AG04449 (cell line): ENCODE measurements at regions of chr1 and their contacts with region 1.

Region 1: GRCh38 chr1:9101510-9102146 is 27.3 kb downstream of the GPR157 start:
- DNase-seq: peak; percentile 16
- H3K4me3 ChIP-seq: no peak overlapping the region
- CTCF ChIP-seq: peak; percentile 87

Region 2: DNA sequence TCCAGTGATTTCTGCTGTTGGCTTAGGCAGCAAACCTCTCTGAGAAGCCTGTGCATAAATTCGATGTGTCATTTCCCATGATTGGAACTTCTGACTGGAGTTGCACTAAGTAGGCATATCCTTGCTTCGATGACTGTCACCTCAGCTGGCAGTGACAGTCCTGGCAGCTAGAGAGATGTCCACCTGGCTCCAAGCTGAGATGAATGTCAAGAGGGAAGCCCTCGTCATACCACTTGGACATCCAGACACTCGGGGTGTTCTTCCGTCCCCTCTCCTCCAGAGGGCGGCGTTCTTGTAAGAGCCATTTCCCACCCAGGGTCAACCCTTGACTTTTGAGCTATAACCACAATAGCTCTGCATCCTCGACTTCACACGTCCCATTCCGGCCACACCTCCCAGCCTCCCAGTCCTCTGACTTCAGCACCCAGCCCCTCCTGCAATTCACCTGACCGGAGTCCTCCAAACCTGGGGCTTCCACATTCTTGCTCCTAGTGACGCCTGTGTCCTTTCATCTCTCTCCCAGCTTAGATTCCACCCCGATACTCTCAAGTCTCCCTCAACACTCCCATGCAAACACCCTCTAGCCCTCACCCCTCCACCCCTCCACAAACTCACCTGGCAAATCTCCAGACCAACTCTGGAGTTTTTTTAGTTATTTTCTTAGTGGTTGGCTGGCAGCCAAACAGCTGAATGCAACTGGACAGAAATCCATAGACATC is 138.7 kb before region 1 on chr1:
- CTCF ChIA-PET with region 1: interaction called, 19 read pairs
- POLR2A ChIA-PET with region 1: no interaction called
- DNase-seq: no peak
- H3K4me3 ChIP-seq: no peak overlapping the region
- CTCF ChIP-seq: peak; percentile 37

Region 3: GRCh38 chr1:9058465-9058864 is 43.2 kb before region 1 on chr1:
- CTCF ChIA-PET with region 1: interaction called, 23 read pairs
- POLR2A ChIA-PET with region 1: no interaction called
- DNase-seq: no peak
- H3K4me3 ChIP-seq: no peak overlapping the region
- CTCF ChIP-seq: peak; percentile 50

Region 4: DNA sequence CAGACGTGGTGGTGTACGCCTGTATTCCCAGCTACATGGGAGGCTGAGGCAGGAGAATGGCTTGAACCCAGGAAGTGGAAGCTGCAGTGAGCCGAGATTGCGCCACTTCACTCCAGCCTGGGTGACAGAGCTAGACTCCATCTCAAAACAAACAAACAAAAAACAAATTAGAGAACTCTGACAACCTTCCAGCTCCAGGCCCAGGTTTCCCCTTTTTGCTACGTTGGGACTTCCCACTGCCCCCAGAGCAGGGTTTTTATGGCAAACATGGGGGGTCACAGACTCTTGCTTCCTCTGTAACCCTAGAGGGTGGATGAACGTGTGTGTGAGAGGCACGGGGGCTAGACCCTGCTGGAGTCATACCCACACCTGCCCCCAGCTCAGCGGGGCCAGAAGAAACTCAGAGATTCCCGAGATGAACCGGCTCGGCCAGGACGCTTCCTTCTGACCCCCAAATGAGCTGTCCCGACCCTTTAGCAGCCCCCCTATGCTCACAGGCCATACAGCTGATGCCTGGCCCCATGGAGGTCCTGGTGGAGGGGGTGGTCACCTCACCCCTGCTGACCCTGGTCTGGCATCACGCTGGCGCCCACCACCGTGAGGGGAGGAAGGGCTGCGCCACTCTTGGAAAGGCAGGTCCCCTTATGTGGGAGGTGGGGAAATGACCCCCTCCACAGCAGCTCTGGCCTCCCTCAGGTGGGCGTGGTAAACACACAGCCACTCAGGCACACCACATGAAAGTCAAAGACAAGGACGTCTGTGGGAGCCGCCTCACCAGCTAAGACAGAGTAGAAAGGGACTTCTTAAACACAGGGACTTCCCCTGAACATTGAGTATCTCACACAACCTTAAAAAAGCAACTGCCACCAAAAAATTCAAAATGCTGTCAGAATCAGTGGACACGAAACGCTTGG is 20.1 kb after region 1 on chr1:
- CTCF ChIA-PET with region 1: interaction called, 17 read pairs
- POLR2A ChIA-PET with region 1: no interaction called
- DNase-seq: no peak
- H3K4me3 ChIP-seq: no peak overlapping the region
- CTCF ChIP-seq: no peak

Region 5: DNA sequence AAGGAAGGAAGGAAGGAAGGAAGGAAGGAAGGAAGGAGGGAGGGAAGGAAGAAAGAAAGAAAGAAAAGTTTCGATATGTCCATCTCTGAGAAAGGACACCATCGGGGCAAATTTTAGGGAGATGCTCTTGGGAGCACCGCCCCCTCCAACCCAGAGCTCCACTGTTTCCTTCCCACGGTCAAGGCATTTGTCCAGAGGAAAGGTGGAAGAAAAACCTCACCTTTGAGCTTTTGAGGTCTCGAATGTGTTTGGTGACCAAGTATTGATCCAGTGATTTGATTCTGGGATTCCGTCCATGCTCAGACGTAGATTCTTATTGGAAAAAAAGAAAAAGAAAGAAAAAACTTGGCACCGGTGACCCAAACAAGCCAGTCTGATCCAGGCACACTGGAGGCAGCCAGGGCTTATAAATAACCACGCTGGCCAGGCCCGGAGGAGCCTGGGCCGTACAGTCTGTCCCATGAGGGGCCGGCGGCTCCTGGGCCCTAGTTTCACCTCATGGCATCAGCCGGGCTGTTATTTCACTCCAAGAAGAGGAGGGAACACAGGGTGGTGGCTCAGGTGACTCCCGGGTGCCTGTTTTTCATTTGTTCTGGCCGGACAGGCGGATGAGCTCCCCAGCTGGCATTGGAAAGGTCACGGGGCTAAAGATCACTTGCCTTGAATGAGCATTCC is 401.5 kb after region 1 on chr1:
- CTCF ChIA-PET with region 1: no interaction called
- POLR2A ChIA-PET with region 1: no interaction called
- DNase-seq: no peak
- H3K4me3 ChIP-seq: no peak overlapping the region
- CTCF ChIP-seq: no peak